Calu3 (cell line): ENCODE measurements at regions of chr22 and their contacts with region 1.

Region 1: GRCh38 chr22:40276996-40277823 is 69.1 kb upstream of the ADSL start:
- DNase-seq: no peak
- H3K4me3 Mint-ChIP-seq: no peak overlapping the region
- H3K27ac Mint-ChIP-seq: no peak overlapping the region
- H3K4me1 Mint-ChIP-seq: peaks cover 8% of the 10 kb centered on the region
- H3K27me3 Mint-ChIP-seq: no peaks in the 10 kb centered on the region
- CTCF ChIP-seq: no peak

Region 2: DNA sequence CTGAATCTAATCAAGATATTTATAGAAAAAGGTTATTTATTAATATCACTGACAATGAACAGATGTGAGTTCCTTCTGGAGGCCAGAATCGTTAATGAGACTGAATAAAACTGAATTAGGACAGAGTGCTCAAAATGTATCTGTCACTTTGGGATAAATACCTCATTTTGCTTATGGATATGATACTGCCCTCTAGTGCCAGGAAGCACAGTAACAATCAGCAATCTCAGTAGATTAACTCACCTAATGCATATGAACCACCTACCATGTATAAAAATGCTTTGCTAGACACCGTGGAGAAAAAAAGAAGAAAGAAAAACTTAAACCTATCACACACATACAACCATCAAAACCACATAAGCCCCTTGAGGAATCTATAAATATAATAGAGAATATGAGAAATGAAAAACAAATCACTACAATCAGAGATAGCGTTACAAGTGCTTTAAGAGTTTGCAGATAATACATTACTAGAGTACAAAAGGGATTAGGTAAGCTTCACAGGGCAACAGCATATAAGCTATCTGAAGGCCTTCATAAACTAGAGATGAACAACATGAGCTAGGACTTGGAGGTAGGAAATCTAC is 210.5 kb after region 1 on chr22:
- CTCF ChIA-PET with region 1: interaction called, 10 read pairs
- intact Hi-C with region 1: no loop called
- DNase-seq: no peak
- H3K4me3 Mint-ChIP-seq: no peak overlapping the region
- H3K27ac Mint-ChIP-seq: no peak overlapping the region
- H3K4me1 Mint-ChIP-seq: peaks cover 16% of the 10 kb centered on the region
- H3K27me3 Mint-ChIP-seq: no peaks in the 10 kb centered on the region
- CTCF ChIP-seq: peak; percentile 60